Naive thymus-derived CD8-positive, alpha-beta T cell (primary cell): ENCODE measurements at regions of chr6 and their contacts with region 1.

Region 1: GRCh38 chr6:32952817-32953739 is at the start of gene HLA-DMA:
- DNase-seq: peak; percentile 37 to 89 (median 78)
- ATAC-seq: peak; percentile 98
- H3K4me3 Mint-ChIP-seq: peak within 1 kb of the TSS; percentile 76 to 88 (median 82)
- H3K27ac Mint-ChIP-seq: peak within 1 kb of the TSS; percentile 85 to 94 (median 90)
- H3K4me1 Mint-ChIP-seq: peaks cover 37 to 76% (median 60%) of the 10 kb centered on the region in 4 donors
- H3K27me3 Mint-ChIP-seq: no peaks in the 10 kb centered on the region
- polyA plus RNA-seq, gene HLA-DMA: 23.7 to 37.4 (median 26.9) TPM

Region 2: DNA sequence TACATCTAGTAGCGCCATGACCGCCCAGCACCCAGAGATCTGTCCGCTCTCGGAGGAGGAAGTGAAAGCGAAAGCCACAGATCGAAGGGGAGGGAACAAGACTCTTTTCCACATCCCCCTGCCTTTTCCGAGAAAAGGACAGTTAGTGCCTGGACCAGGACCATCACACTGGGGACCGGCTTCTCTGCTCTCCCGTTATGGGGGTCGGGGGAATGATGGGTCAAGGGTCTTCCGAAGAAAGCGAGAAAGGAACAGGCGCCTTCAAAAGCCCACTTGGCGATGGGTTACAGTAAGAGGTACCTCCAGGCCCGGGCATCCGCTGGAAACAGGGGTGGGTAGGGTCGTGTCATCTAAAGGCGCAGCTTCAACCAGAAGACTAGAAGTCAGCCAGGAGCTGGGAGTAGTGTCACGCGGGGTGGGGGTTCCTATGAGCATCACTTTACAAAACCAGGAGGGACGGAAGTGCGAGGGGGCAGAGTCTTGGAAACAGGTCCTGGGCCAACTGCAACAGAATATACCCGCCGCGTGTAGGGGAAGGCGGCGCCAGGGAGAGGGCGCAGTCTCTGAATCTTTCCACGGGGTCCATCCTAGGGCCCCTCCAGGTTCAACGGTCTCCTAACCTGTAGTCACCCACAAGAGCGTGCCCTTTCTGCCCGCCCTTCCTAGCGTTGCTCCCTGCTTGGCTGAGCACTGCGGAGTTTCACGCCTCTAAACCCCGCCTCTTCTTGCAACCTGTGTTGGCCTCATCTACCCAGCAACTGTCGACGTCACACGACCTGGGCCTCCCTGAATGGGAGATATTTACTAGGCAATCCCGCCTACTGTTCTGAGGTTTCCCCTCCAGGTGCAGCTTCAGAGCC is 108.9 kb before region 1 on chr6 and contains the start of gene PSMB8:
- POLR2A ChIA-PET with region 1: interaction called, 12 read pairs
- DNase-seq: peak; percentile 85 to 99 (median 98)
- ATAC-seq: peak; percentile 74 to 81
- H3K4me3 Mint-ChIP-seq: peak within 1 kb of the TSS; percentile 92 to 100 (median 98)
- H3K27ac Mint-ChIP-seq: peak within 1 kb of the TSS; percentile 98 to 100 (median 100)
- H3K4me1 Mint-ChIP-seq: peaks cover 54 to 90% (median 81%) of the 10 kb centered on the region in 4 donors
- H3K27me3 Mint-ChIP-seq: no peaks in the 10 kb centered on the region
- polyA plus RNA-seq, gene PSMB8: 350 to 386 (median 386) TPM

Region 3: DNA sequence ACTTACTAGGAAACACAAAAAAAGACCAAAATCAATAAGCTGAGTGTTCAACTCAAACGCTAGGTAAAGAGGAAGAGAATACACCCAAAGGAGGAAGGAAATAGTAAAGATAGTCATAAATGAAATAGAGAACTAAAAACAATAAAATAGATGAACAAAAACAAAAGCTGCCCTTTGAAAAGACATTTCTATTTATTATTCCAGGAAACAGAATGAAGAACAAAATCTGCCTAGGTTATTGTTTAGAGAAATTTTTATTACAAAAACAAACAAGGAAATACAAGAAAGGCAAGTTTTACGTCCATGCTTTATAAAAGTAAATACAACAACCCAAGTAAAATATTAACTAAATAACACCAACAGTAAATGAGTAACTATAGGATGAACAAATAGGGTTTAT is 32.4 kb before region 1 on chr6:
- POLR2A ChIA-PET with region 1: no interaction called
- DNase-seq: no peak
- ATAC-seq: no peak
- H3K4me3 Mint-ChIP-seq: peak overlapping the region in 1 of 10 donors; percentile 37
- H3K27ac Mint-ChIP-seq: peak overlapping the region in 1 of 10 donors; percentile 54
- H3K4me1 Mint-ChIP-seq: peaks cover 0 to 38% (median 0%) of the 10 kb centered on the region in 4 donors
- H3K27me3 Mint-ChIP-seq: peaks cover 0 to 5% (median 1%) of the 10 kb centered on the region in 5 donors

Region 4: DNA sequence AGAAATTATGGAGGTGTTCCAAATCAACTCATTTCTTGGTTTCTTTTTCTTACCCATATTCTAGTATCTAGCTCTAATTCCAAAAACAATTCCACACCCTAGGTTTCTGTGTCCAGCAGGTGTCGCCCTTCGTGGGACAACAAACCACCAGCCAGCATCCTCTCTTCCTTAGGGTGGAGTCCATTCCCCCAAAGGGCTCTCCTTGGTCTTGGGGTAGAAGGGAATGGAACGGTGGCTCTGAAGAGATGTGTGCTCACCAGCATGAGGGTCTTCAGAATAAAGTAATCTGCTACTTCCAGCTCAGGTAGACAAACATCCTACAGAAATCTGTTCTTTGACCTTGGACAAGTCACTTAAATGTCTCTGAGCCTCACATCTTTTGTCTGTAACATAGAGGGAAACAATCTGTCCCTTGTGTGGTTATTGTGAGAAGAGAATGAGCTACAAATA is 19.4 kb before region 1 on chr6:
- POLR2A ChIA-PET with region 1: interaction called, 30 read pairs
- DNase-seq: peak; percentile 56 to 88 (median 68)
- ATAC-seq: peak; percentile 53 to 80
- H3K4me3 Mint-ChIP-seq: no peak overlapping the region
- H3K27ac Mint-ChIP-seq: peak overlapping the region in 4 of 10 donors; percentile 6 to 63 (median 38)
- H3K4me1 Mint-ChIP-seq: peaks cover 5 to 60% (median 9%) of the 10 kb centered on the region in 4 donors
- H3K27me3 Mint-ChIP-seq: no peaks in the 10 kb centered on the region

Region 5: DNA sequence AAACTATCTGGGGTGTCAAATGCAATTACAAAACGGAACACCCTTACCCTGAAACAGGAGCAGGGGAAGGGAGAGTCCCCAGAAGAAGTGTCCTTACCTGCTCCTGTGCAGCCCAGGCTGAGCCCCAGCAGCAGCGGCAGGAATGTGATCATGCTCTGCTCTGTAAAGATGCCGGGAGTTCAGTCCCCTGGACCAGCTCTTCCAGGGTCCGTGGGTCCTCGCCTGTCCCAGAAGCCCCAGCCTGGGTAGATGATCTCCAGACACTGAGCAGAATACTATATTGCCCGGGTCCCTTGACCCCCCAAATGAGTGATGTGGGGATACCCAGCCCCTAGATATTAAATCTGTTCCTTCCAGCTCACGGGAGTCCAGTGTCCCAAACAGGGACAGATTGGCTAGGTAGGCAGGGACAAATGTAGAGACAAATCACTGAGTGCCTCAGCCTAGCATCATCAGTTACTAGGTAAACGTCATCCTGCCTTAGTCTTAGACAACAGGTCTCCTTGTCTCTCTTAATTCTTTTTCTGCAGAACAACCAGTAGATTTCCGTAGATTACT is 12.3 kb before region 1 on chr6 and contains the start of gene HLA-DMB:
- POLR2A ChIA-PET with region 1: interaction called, 65 read pairs
- DNase-seq: peak in 9 of 10 donors; percentile 42 to 80 (median 63)
- ATAC-seq: peak; percentile 83 to 85
- H3K4me3 Mint-ChIP-seq: peak within 1 kb of the TSS; percentile 84 to 97 (median 94)
- H3K27ac Mint-ChIP-seq: peak within 1 kb of the TSS; percentile 88 to 98 (median 97)
- H3K4me1 Mint-ChIP-seq: peaks cover 43 to 92% (median 64%) of the 10 kb centered on the region in 4 donors
- H3K27me3 Mint-ChIP-seq: no peaks in the 10 kb centered on the region
- polyA plus RNA-seq, gene HLA-DMB: 10.8 to 22.5 (median 16.8) TPM

Region 6: DNA sequence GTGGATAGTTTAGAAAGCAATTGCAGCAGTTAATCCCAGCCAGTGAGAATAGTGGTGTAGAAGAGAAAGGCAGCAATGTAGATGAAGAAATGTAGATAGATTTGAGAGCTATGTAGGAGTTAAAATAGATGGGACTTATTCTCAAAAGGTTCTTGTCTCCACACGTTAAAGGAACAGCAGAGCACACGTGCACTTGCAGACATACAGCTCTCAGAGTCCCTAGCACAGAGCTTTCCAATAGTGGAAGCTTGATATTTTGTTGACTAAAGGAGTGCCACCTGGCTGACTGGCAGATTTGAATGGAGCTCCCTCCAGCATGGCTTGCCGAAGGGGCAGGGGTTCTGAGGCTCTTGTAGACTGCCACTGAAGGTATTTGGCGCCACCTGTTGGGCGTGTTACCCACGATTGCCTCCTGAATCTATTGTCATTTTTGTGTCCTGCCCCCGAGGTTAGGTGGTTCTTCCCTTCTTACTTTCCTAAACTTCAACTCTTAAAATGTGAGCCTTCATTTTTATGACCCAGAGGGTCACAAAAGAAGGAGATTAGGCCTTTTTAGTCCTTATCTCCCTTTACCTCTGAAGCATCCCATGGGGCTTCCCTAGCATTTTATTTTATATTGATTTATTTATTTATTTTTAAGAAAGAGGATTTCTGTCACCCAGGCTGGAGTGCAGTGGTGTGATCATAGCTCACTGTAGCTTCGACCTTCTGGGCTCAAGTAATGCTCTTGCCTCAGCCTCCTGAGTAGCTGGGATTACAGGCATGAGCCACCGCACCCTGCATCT is 31.7 kb after region 1 on chr6:
- POLR2A ChIA-PET with region 1: interaction called, 45 read pairs
- DNase-seq: peak; percentile 78 to 95 (median 87)
- ATAC-seq: peak; percentile 88 to 99
- H3K4me3 Mint-ChIP-seq: no peak overlapping the region
- H3K27ac Mint-ChIP-seq: peak overlapping the region in 9 of 10 donors; percentile 14 to 84 (median 67)
- H3K4me1 Mint-ChIP-seq: peaks cover 9 to 30% (median 25%) of the 10 kb centered on the region in 4 donors
- H3K27me3 Mint-ChIP-seq: no peaks in the 10 kb centered on the region